ENCODE measurements at regions of chr11 and their contacts with region 1.

Region 1: DNA sequence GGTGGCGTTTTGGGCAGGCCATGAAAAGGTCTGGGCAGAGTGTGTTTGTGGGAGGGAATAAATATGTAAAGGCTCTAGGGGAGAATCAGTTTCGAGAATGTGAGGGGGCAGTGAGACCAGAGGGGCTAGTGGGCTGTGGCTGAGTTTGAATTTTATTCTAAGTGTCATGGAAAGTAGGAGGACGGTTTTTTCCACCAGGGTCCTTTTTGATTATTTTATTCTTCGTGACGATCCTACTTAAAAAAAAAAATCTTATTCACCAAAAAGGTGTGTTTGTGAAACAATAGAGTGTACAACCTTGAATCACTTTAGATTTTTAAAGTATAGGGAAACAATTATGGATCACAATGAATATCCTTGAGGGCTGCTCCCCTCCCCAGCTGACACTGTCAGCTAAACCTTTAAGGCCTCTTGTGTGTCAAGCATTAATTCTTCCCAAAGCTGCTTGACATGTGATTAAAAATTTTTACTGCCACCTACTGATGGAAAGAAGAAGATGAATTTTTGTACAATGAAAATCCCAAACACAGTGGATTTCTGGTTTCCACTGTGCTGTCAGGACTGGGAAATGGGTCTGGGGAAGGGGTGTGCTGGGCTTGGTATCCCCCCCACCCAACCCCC is 107.5 kb upstream of the OR4B1 start:
- DNase-seq: no peak
- ATAC-seq: peak; percentile 6
- H3K4me3 Mint-ChIP-seq: peak overlapping the region; percentile 75
- H3K27ac Mint-ChIP-seq: peak overlapping the region; percentile 88
- H3K4me1 Mint-ChIP-seq: peaks cover 77% of the 10 kb centered on the region
- H3K27me3 Mint-ChIP-seq: no peaks in the 10 kb centered on the region
- CTCF ChIP-seq: no peak

Region 2: GRCh38 chr11:47578524-47579460 is 530.4 kb before region 1 on chr11 and contains the starts of genes KBTBD4 and NDUFS3:
- CTCF ChIA-PET with region 1: no interaction called
- POLR2A ChIA-PET with region 1: no interaction called
- intact Hi-C with region 1: loop called (anchors 2 kb)
- DNase-seq: peak; percentile 90
- ATAC-seq: peak; percentile 93
- H3K4me3 Mint-ChIP-seq: peak within 1 kb of the TSS; percentile 99
- H3K27ac Mint-ChIP-seq: peak within 1 kb of the TSS; percentile 97
- H3K4me1 Mint-ChIP-seq: peaks cover 38% of the 10 kb centered on the region
- H3K27me3 Mint-ChIP-seq: no peaks in the 10 kb centered on the region
- CTCF ChIP-seq: no peak
- total RNA-seq, gene KBTBD4: 19.5 and 20.4 TPM in 2 replicates
- total RNA-seq, gene NDUFS3: 95.9 and 102 TPM in 2 replicates

Region 3: GRCh38 chr11:47847892-47848635 is 261.1 kb before region 1 on chr11 and contains the start of gene NUP160:
- CTCF ChIA-PET with region 1: interaction called, 30 read pairs
- POLR2A ChIA-PET with region 1: interaction called, 25 read pairs
- intact Hi-C with region 1: loop called (anchors 1 kb)
- DNase-seq: peak; percentile 92
- ATAC-seq: peak; percentile 83
- H3K4me3 Mint-ChIP-seq: peak within 1 kb of the TSS; percentile 98
- H3K27ac Mint-ChIP-seq: peak within 1 kb of the TSS; percentile 97
- H3K4me1 Mint-ChIP-seq: peaks cover 67% of the 10 kb centered on the region
- H3K27me3 Mint-ChIP-seq: no peaks in the 10 kb centered on the region
- CTCF ChIP-seq: no peak
- total RNA-seq, gene NUP160: 53.2 and 70.8 TPM in 2 replicates

Region 4: DNA sequence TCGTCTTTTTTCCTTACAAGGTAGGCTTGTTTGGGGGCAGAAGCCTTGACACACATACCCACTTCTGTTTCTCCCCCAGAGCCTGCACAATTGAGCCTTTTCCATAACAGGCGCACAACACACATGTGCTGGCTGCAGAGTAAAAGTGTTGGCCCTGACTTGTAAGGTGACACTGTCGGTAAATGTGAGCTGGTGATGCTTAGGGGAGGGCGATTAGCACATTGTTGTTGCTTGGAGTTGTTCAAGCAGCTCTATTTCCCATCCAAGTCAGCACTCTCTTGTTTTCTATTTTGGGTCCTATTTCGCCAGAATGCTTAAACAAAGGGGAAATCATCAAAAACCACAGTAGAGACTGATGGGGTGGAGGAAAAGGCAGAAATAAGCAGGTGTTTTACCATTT is 180.7 kb before region 1 on chr11:
- CTCF ChIA-PET with region 1: interaction called, 159 read pairs
- POLR2A ChIA-PET with region 1: interaction called, 55 read pairs
- intact Hi-C with region 1: no loop called
- DNase-seq: no peak
- ATAC-seq: peak; percentile 37
- H3K4me3 Mint-ChIP-seq: peak overlapping the region; percentile 12
- H3K27ac Mint-ChIP-seq: peak overlapping the region; percentile 30
- H3K4me1 Mint-ChIP-seq: peaks cover 52% of the 10 kb centered on the region
- H3K27me3 Mint-ChIP-seq: no peaks in the 10 kb centered on the region
- CTCF ChIP-seq: no peak

Region 5: DNA sequence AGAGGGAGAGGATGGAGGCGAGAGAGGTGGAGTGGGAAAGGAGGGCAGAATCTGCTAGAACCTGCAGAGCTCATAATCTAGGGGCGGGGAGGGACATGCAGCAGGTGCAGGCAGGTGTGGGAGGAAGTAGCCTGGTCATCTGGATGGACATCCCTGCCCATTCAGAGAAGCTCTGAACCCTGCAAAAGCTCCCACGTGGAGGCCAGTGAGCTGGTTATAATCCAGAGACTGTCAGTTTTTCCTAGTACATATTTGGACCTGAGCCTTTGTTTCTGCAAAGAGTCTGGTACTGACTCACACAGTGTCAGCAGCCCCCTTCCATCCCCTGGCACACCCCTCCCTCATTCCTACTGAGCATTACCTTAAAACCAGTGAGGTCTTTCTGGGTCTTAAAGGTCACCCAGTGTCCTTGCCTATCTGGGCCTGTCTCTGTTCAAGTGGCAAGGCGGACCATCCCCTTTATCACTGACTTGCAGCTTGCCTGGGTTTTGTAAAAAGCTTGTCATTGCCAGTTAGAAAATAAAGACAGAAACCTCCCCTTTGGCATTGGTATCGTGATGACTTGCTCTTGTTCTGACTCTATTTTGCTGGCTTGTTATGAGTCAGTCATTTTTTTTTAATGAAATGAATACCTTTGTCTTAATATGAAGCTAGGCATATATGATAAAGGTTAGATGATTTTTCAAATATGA is 102.7 kb before region 1 on chr11:
- CTCF ChIA-PET with region 1: interaction called, 4 read pairs
- POLR2A ChIA-PET with region 1: interaction called, 18 read pairs
- intact Hi-C with region 1: no loop called
- DNase-seq: no peak
- ATAC-seq: peak; percentile 49
- H3K4me3 Mint-ChIP-seq: no peak overlapping the region
- H3K27ac Mint-ChIP-seq: peak overlapping the region; percentile 79
- H3K4me1 Mint-ChIP-seq: peaks cover 64% of the 10 kb centered on the region
- H3K27me3 Mint-ChIP-seq: no peaks in the 10 kb centered on the region
- CTCF ChIP-seq: no peak

Region 6: GRCh38 chr11:48043111-48043990 is 65.8 kb before region 1 on chr11:
- CTCF ChIA-PET with region 1: interaction called, 6 read pairs
- POLR2A ChIA-PET with region 1: interaction called, 10 read pairs
- intact Hi-C with region 1: no loop called
- DNase-seq: no peak
- ATAC-seq: peak; percentile 73
- H3K4me3 Mint-ChIP-seq: peak overlapping the region; percentile 52
- H3K27ac Mint-ChIP-seq: peak overlapping the region; percentile 67
- H3K4me1 Mint-ChIP-seq: peaks cover 63% of the 10 kb centered on the region
- H3K27me3 Mint-ChIP-seq: no peaks in the 10 kb centered on the region
- CTCF ChIP-seq: no peak